ENCODE measurements at regions of chr19 and their contacts with region 1.

Region 1: GRCh38 chr19:58203814-58204475 is 21.1 kb downstream of the ZNF274 start:
- DNase-seq: no peak
- H3K4me3 ChIP-seq: no peak overlapping the region
- H3K27ac ChIP-seq: no peak overlapping the region
- H3K4me1 ChIP-seq: no peaks in the 10 kb centered on the region
- H3K27me3 ChIP-seq: no peaks in the 10 kb centered on the region
- CTCF ChIP-seq: no peak
- EP300 ChIP-seq: no peak
- POLR2A ChIP-seq: no peak
- RAD21 ChIP-seq: no peak

Region 2: DNA sequence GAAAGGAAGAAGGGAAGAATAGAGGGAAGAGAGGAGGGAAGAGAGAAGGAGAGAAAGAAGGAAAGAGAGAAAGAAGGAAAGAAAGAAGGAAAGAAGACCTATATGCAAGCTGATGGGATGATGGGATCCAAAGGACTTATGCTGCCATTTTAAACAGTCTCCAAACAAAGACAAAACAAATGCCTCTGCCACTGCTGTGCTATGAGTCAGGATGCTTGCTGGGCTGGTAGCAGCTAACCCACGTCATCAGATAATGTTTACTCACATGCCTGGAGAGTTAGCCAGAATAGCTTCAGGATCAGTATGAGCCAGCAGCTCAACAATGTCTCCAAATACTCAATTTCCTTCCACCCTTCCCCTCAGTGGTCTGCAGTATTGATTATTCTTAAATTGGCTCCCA is 33.1 kb before region 1 on chr19:
- CTCF ChIA-PET with region 1: no interaction called
- POLR2A ChIA-PET with region 1: no interaction called
- DNase-seq: no peak
- H3K4me3 ChIP-seq: no peak overlapping the region
- H3K27ac ChIP-seq: no peak overlapping the region
- H3K4me1 ChIP-seq: no peaks in the 10 kb centered on the region
- H3K27me3 ChIP-seq: no peaks in the 10 kb centered on the region
- CTCF ChIP-seq: no peak
- EP300 ChIP-seq: no peak
- POLR2A ChIP-seq: no peak
- RAD21 ChIP-seq: no peak

Region 3: DNA sequence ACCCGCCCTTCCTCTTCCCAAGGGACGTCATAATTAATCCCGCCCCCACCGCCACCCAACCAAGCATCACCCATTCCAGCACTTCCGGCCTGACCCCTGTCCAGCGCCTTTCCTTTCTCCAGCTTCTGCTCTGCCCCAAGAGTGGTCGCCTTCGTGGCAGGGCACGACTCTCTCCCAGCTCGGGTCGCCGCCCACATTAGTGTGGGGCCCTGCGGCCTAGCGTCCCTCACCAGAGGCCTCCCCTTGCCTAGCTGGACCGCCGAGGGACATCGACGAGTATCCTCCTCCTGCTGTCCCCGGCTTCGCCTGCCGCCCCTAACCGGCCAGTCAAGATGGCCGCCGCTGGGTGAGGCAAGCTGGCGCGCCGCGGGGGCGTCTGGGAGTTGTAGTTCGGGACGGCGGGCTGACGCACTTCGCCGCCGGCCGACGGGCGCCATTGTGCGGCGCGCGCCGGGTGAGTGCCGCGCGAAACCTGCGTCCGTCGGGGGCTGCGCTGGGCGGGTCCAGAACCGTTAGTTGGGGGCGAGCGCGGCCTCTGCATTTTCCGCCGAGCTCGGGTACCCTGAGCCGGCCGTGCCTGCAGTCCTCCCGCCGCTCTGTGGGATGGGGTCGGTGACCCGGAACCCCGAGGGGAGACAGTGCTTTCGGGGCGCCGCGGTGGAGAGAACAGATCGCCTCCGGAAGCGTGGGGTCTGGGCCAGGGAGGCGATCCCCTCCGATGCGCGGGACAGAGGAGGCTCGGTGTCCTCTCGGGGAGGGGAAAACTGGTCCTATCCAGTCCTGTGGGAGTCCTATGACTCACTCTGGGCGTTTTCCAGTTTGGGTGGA is 20.7 kb before region 1 on chr19 and contains the start of gene ZNF274:
- CTCF ChIA-PET with region 1: interaction called, 7 read pairs
- POLR2A ChIA-PET with region 1: interaction called, 19 read pairs
- DNase-seq: peak; percentile 84 to 97
- H3K4me3 ChIP-seq: peak within 1 kb of the TSS; percentile 94 to 97 (median 96)
- H3K27ac ChIP-seq: peak within 1 kb of the TSS; percentile 99
- H3K4me1 ChIP-seq: no peaks in the 10 kb centered on the region; a peak in 1 of 7 replicates
- H3K27me3 ChIP-seq: no peaks in the 10 kb centered on the region
- CTCF ChIP-seq: no peak
- EP300 ChIP-seq: no peak
- POLR2A ChIP-seq: peak; percentile 87 to 96
- RAD21 ChIP-seq: no peak
- total RNA-seq, gene ZNF274: 25.1 and 27.7 TPM in 2 replicates

Region 4: GRCh38 chr19:58218899-58219298 is 15.0 kb after region 1 on chr19:
- CTCF ChIA-PET with region 1: interaction called, 3 read pairs
- POLR2A ChIA-PET with region 1: interaction called, 17 read pairs
- DNase-seq: peak in 1 of 2 experiments; percentile 60
- H3K4me3 ChIP-seq: no peak overlapping the region
- H3K27ac ChIP-seq: no peak overlapping the region
- H3K4me1 ChIP-seq: peaks cover 0 to 2% (median 0%) of the 10 kb centered on the region in 4 experiments; a peak in 1 of 7 replicates
- H3K27me3 ChIP-seq: no peaks in the 10 kb centered on the region
- CTCF ChIP-seq: peak; percentile 44 to 63 (median 59)
- EP300 ChIP-seq: no peak
- POLR2A ChIP-seq: no peak
- RAD21 ChIP-seq: peak; percentile 67 to 71